CD8-positive, alpha-beta memory T cell (primary cell): ENCODE measurements at regions of chr16 and their contacts with region 1.

Region 1: DNA sequence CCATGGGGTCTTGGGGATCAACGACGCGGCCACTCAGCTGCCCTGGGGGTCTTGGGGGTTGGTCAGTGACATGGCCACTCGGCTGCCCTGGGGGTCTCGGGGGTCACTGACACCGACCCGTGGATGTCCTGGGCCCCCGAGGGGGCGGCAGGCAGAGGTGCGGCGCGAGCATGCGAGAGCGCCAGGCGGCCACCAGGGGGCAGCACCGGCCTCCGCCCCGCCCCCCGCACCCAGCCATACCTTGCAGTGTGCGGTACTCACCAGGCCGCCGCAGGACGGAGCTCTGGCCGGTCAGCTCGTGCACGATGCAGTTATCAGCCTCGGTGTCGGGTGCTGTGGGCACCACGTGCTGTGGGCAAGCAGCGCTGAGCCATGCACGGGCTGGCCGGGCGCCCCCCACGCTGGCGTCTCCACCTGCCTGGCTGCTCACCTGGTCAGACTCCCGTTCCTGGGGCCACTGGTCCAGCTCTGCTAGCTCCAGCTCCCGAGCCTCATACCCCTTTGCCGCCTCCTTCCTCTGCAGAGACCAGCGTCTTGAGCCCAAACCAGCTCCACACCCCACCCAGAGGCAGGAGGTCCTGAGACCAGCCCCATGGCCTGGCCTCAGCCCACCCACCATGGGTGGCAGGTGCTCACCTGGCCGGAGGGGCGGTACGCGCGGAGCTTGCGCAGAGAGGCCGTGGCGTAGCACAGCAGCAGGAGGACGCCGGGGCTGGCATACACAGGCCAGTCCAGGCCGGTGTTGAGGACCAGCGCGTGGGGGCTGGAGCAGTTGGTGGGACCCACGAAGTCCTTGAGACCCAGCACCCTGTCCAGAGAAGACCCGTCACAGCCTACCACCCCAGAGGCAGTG is 31.2 kb downstream of the CTU2 start:
- DNase-seq: peak; percentile 51 to 86 (median 73)
- H3K4me3 ChIP-seq: no peak overlapping the region
- H3K4me3 Mint-ChIP-seq: no peak overlapping the region
- H3K27ac ChIP-seq: no peak overlapping the region
- H3K27ac Mint-ChIP-seq: peak overlapping the region in 2 of 8 donors; percentile 17 to 47
- H3K4me1 ChIP-seq: peaks cover 10% of the 10 kb centered on the region
- H3K4me1 Mint-ChIP-seq: peaks cover 0 to 8% (median 0%) of the 10 kb centered on the region in 3 donors
- H3K27me3 ChIP-seq: no peaks in the 10 kb centered on the region
- H3K27me3 Mint-ChIP-seq: no peaks in the 10 kb centered on the region

Region 2: DNA sequence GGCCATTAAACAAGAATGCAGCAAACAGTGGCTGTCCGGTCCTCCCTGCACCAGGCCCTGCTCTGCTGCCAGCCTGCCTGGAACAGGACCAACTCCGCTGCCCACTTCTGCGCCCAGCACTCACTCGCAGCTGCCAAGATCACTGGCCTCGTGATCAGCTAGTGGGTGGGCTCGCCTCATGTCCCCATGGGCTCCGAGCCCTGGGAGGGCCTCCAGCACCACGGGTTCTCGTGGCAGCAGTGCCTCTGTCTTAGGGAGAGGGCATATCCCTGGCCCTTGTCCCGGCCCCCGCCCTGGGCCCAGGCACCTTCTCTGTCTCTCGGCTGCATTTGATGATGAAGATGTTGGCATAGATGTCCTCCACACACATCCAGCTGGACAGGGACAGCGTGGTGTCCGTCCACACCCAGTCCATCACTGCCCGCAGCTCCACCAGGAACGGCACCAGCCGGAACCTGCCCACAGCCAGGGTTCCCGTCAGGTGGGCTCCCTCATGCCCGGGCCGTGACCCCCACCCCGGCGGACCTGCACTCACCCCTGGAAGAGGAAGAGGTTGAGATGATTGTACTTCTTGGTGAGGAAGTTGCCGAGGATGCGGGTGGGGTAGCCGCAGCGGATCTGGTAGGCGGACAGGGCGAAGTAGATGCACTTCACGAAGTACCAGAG is 18.1 kb before region 1 on chr16:
- CTCF ChIA-PET with region 1: interaction called, 17 read pairs
- POLR2A ChIA-PET with region 1: no interaction called
- DNase-seq: no peak
- H3K4me3 ChIP-seq: no peak overlapping the region
- H3K4me3 Mint-ChIP-seq: no peak overlapping the region
- H3K27ac ChIP-seq: no peak overlapping the region
- H3K27ac Mint-ChIP-seq: no peak overlapping the region
- H3K4me1 ChIP-seq: no peaks in the 10 kb centered on the region
- H3K4me1 Mint-ChIP-seq: no peaks in the 10 kb centered on the region
- H3K27me3 ChIP-seq: no peaks in the 10 kb centered on the region
- H3K27me3 Mint-ChIP-seq: peaks cover 0 to 5% of the 10 kb centered on the region in 2 donors

Region 3: DNA sequence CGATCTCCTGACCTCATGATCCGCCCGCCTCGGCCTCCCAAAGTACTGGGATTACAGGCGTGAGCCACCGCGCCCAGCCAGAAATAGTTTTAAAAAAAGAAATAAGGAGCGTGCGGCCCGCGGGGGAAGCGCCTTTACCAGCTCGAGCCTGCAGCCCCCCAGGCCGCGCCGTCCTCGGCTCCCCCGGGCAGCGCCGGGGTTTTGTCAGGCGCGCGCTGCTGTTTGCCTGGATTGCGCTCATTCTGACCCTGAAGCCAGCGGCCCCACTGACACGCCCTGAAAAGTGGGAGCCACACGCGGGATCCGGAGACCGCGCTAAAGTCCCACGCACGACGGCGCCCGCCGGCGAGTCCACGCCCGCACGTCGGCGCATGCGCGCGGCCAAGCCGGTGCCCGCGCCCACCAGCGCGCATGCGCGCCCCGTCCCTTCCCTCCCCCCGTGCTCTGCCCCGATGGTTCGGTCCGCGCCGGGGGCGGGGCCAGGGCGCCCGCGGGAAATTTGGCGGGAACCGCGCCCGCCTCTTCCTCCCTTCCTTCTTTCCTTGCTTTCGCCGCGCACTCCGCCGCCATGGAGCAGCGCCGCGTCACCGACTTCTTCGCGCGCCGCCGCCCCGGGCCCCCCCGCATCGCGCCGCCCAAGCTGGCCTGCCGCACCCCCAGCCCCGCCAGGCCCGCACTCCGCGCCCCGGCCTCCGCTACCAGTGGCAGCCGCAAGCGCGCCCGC is 65.9 kb after region 1 on chr16 and contains the start of gene CDT1:
- CTCF ChIA-PET with region 1: interaction called, 15 read pairs
- POLR2A ChIA-PET with region 1: no interaction called
- DNase-seq: peak; percentile 80 to 88 (median 82)
- H3K4me3 ChIP-seq: peak within 1 kb of the TSS; percentile 58
- H3K4me3 Mint-ChIP-seq: peak within 1 kb of the TSS; percentile 83 to 93 (median 87)
- H3K27ac ChIP-seq: peak within 1 kb of the TSS; percentile 74
- H3K27ac Mint-ChIP-seq: peak within 1 kb of the TSS; percentile 68 to 95 (median 80)
- H3K4me1 ChIP-seq: peaks cover 23% of the 10 kb centered on the region
- H3K4me1 Mint-ChIP-seq: peaks cover 6 to 38% (median 10%) of the 10 kb centered on the region in 3 donors
- H3K27me3 ChIP-seq: no peaks in the 10 kb centered on the region
- H3K27me3 Mint-ChIP-seq: no peaks in the 10 kb centered on the region
- total RNA-seq, gene CDT1: 97.6 to 106 TPM

Region 4: DNA sequence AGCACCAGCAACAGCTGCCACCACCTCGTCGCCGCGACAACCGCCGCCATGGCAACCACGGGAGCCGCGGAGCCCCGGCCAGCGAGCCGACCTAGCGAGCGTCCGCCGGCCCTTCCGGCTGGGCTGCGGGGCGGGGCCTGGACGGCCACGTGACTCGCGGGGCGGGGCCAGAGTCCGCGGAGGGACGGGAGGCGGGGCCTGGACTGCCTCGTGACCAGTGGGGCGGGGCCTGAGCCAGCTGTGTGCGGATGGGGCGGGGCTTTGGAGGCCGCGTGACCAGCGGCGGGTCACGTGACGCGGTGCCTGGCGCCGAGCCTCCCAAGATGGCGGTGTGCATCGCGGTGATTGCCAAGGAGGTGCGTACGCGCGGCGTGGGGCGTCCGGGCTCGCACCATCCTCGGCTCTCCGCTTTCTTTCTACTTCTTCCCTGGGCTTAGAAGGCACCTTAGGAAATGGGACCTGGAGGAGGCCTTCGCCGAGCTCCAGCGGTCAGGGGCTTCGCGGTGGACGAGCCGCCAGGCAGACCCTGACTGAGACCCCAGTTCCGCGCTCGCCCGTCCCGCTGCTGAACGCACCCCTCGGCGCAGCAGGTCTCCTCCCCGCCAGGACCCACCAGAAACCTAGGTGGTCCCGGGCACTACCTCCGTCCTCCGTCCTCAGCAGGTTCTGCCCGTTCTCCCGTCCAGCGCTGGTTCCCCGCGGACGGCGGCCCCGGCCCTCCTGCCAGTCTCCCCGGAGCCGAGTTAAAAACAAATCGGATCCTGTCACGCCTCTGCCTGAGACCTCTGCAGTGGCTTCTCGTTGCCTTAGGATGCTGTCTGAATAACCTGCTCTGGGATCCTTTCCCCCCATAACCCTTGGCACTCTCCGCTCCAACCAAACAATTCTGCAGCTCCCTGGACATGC is 119.6 kb after region 1 on chr16 and contains the starts of genes GALNS and TRAPPC2L:
- CTCF ChIA-PET with region 1: interaction called, 43 read pairs
- POLR2A ChIA-PET with region 1: interaction called, 3 read pairs
- DNase-seq: peak; percentile 97 to 100 (median 98)
- H3K4me3 ChIP-seq: peak within 1 kb of the TSS; percentile 97
- H3K4me3 Mint-ChIP-seq: peak within 1 kb of the TSS; percentile 93 to 100 (median 98)
- H3K27ac ChIP-seq: peak within 1 kb of the TSS; percentile 89
- H3K27ac Mint-ChIP-seq: peak within 1 kb of the TSS; percentile 81 to 100 (median 98)
- H3K4me1 ChIP-seq: peaks cover 33% of the 10 kb centered on the region
- H3K4me1 Mint-ChIP-seq: peaks cover 24 to 48% (median 38%) of the 10 kb centered on the region in 3 donors
- H3K27me3 ChIP-seq: no peaks in the 10 kb centered on the region
- H3K27me3 Mint-ChIP-seq: peaks cover 0 to 2% of the 10 kb centered on the region in 2 donors
- total RNA-seq, gene GALNS: 19.2 to 22.5 TPM
- total RNA-seq, gene TRAPPC2L: 90.0 to 104 TPM